AG04449 (cell line): ENCODE measurements at regions of chr17 and their contacts with region 1.

Region 1: DNA sequence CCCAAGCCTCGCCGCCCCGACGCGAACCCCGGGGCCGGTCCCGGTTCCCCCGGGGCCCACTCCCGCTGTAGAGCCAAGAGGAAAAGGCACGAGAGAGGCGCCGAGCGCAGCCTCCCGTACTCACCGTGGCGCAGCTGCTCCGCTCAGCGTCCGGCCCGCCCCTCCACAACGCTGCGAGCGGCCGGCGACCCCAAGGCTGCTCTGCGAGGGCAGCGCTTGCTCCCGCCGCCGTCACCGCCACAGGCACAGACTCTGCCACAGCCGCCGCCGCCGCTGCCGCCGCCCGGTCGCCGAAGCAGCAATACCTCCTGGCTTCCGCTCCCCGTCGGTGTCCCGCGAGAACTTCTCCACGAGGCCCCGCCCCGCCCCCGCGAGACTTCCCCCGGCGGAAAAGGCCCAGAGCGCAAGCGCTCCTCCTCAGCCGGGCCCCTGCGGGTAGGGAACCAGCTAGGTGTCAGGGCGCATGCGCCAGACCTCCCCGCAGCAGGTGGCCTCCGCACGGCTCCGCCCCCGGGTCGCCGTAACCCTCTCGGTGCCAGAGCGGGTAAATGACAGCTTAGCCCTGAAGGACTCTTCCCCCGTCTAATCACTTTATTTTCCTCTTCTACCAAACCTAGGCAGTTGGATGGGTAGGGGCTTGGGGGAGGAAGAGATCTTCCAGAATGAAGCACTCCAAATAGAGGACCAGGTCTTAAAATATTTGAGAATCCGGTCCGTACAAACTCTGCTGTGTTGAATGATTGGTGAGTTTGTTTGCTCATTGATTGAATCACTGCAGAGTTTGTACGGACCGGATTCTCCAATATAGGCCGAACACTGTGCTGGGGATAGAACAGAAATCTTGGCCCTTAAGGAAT is at the start of gene GRB2:
- DNase-seq: no peak
- H3K4me3 ChIP-seq: peak within 1 kb of the TSS; percentile 93
- CTCF ChIP-seq: no peak

Region 2: DNA sequence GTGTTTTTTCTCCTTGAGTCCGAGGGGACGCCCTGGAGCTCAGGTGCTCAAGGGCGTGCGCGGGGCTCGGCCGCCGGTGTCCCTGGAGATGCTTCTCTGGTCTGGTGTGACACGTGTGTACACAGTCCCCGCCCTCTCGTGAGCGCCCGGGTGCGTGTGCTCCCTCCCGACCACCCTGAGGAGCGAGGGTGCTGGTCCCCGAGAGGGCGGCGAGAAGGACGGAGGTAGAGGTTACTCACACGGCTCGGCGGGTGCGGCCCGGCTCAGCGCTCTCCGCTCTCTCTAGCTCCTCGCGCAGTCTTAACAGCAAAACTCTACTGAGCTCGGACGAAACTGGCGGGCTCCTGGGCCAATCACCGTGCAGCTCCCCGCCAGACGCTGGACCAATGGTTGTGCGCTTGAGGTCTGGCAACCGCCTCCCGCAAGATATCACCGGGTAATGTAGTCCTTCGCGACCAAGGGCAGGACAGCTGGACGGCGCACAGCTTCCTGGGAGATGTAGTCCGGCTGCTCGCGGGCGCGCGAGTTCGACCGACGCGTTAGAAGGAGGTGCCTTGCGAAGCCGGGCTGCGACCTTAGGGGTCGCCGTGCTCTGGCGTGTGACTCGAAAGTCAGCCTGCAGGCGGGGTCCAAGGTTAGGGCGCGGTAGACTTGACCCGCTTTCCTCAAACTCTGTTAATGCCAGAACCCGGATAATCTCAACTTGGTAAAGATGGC is 116.3 kb before region 1 on chr17 and contains the start of gene SLC25A19:
- CTCF ChIA-PET with region 1: interaction called, 6 read pairs
- POLR2A ChIA-PET with region 1: interaction called, 12 read pairs
- DNase-seq: peak; percentile 90
- H3K4me3 ChIP-seq: peak within 1 kb of the TSS; percentile 92
- CTCF ChIP-seq: no peak

Region 3: DNA sequence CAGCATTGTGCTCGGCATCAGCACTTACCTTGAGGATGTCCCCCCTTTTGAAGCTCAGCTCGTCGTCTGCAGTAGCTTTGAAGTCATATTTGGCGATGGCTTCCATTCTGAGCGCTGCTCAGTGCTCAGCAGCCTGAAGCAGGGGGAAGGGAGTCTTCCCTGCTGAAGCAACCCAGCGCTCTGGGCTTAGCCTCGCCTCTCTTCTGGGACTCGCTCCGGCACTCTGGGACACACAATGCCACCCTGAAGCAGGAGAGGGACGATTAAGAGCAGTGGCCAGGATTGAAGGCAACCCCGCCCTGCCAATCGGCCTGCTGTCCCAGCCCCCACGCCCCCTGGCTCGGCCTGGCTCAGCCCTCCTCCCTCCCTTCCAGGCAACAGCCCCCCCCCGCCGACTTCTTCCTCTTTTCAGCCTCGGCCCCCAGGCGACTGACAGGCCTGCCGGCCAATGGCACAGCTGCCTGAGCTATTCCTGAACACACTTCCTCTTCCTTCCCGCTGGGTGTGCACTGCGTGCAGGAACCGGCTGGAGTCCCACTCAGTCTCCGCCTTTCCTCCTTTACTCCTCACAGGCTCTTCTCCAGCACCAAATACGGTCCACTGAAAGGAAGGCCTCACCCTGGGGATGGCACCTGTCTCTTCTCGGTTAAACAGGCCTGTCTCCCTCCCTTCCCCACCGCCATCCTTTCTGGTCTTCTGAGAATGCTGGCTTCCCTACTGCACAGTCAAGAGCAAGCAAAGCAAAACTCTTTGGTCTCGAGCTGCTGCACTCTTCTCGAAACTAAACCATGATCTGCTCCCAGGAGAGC is 11.9 kb before region 1 on chr17:
- CTCF ChIA-PET with region 1: interaction called, 19 read pairs
- POLR2A ChIA-PET with region 1: interaction called, 13 read pairs
- DNase-seq: peak; percentile 93
- H3K4me3 ChIP-seq: peak overlapping the region; percentile 88
- CTCF ChIP-seq: no peak